AG04450 (cell line): ENCODE measurements at regions of chr18 and their contacts with region 1.

Region 1: DNA sequence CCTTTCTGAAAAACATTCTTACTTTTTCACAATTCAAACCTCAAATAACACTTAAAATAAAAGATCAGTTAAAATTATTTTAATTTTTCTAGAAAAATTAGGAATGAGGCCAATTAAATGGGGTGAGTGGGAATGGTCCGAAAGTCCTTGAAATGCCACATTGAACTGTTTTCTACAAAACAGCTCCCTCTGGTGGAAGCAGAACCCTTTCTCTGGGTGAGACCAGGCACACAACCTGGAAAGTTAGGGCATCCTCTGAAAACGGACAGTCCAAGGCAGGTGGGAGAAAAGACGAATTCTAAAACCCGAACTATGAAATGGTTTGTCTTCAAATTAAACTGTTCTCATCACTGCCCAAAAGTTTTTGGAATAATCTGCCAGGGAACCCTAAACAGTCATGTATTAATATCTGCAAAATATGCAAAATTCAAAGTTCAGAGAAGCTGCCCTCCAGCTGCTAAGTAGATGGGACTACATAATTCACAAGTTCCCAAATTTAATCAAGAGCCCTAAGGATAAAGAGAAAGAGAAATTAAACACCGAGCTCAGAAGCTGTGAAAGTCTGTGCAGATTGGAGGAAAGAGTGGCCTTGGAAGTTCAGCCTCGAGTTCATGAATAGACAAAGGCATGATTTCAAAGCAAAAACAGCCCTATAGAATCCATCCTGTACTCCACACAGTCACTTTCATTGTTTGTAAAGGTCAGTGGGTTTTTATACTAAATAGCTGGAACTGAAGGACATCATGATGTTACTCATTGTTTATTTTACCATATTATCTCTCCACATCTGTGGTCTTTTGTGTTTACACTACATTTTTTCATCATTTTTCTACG is 108.3 kb downstream of the PIEZO2 start:
- DNase-seq: peak; percentile 30
- H3K4me3 ChIP-seq: no peak overlapping the region
- H3K27ac ChIP-seq: no peak overlapping the region
- H3K27me3 ChIP-seq: peaks cover 2% of the 10 kb centered on the region
- CTCF ChIP-seq: peak; percentile 83

Region 2: GRCh38 chr18:10776493-10776892 is 264.5 kb before region 1 on chr18:
- CTCF ChIA-PET with region 1: no interaction called
- POLR2A ChIA-PET with region 1: no interaction called
- DNase-seq: no peak
- H3K4me3 ChIP-seq: no peak overlapping the region
- H3K27ac ChIP-seq: no peak overlapping the region
- H3K27me3 ChIP-seq: no peaks in the 10 kb centered on the region
- CTCF ChIP-seq: no peak

Region 3: GRCh38 chr18:10851824-10852319 is 189.2 kb before region 1 on chr18:
- CTCF ChIA-PET with region 1: interaction called, 188 read pairs
- POLR2A ChIA-PET with region 1: no interaction called
- DNase-seq: peak; percentile 33
- H3K4me3 ChIP-seq: no peak overlapping the region
- H3K27ac ChIP-seq: no peak overlapping the region
- H3K27me3 ChIP-seq: peaks cover 24% of the 10 kb centered on the region
- CTCF ChIP-seq: peak; percentile 82

Region 4: DNA sequence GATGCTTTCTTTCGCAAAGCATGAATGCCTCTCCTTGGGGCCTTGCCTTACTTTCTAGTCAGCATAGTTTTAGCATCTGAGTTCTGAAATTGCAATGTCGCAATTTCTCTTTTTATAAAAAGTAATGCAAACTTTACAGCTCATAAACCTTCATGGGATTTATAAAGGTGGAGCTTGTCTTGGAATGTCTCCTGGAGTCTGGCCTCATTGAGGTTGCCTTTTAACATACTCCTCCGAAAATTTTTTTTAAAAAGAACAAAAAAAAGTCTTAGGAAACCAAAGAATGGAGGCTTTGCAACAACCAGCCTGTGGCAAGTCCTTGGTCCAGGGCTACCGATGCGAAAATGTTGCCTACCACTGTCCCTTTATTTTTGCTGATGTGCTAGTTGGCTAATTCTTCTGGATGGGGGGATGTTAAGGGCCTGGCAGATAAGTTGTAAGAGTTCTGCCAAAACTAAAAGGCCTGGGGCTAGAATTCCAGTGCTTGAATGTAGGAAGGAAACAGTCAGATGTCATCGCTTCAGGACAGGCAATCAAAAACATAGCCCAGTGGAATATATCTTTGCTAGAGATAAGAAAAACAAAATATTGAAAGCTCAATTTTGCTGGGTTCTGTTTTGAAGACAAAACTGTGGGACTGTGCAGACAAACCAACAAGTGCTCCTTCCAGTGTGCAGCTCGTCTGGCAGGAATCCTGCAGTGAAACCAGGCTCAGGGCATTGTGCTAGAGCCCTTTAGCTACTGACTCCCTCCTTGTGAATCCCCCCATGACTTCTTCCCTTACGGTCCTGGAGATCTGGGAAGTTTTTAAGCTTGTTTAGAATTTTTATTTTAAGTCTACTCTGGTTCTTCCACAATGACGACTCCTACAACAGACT is 104.6 kb before region 1 on chr18:
- CTCF ChIA-PET with region 1: interaction called, 11 read pairs
- POLR2A ChIA-PET with region 1: no interaction called
- DNase-seq: no peak
- H3K4me3 ChIP-seq: no peak overlapping the region
- H3K27ac ChIP-seq: peak overlapping the region; percentile 49
- H3K27me3 ChIP-seq: no peaks in the 10 kb centered on the region
- CTCF ChIP-seq: no peak

Region 5: GRCh38 chr18:11027862-11028261 is 13.2 kb before region 1 on chr18:
- CTCF ChIA-PET with region 1: interaction called, 14 read pairs
- POLR2A ChIA-PET with region 1: no interaction called
- DNase-seq: no peak
- H3K4me3 ChIP-seq: no peak overlapping the region
- H3K27ac ChIP-seq: no peak overlapping the region
- H3K27me3 ChIP-seq: peaks cover 11% of the 10 kb centered on the region
- CTCF ChIP-seq: no peak

Region 6: DNA sequence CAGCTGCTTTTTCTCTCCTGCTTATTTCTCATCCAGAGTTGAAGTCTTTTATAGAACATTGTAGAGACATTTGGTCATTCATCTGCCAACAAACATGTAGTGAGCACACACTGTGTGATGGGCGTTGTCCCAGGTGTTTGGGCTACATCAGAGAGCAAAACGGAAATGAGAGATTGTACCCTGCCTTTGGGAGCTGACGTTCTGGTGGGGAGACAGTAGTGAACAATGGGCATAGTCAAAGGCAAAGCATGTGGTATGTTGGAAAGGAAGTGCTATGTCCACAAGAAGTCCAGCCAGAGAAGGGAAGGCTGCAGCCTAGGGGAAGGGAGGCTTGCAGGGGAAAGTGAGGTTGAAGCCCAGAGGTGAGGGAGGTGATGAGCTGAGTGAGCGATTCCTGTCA is 30.3 kb after region 1 on chr18:
- CTCF ChIA-PET with region 1: interaction called, 12 read pairs
- POLR2A ChIA-PET with region 1: no interaction called
- DNase-seq: no peak
- H3K4me3 ChIP-seq: no peak overlapping the region
- H3K27ac ChIP-seq: no peak overlapping the region
- H3K27me3 ChIP-seq: peaks cover 2% of the 10 kb centered on the region
- CTCF ChIP-seq: no peak

Region 7: DNA sequence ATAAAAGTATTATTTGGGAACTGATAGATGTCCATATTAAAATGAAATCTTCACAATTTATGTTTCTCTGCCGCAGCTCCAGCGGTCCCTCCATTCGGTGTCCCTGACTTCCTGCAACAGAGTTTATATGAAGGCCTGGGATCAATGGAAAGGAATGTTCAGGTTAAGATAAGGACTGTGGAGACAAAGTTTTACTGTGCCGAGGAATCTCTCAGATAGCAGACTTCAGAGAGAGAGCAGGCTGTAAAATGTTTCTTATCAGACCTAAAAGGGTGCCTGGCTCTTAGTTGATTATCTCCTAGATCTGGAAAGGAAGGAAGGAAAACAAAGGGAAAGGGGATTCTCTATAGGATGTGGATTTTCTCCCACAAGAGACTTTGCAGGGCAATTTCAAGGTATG is 302.1 kb after region 1 on chr18:
- CTCF ChIA-PET with region 1: no interaction called
- POLR2A ChIA-PET with region 1: no interaction called
- DNase-seq: no peak
- H3K4me3 ChIP-seq: no peak overlapping the region
- H3K27ac ChIP-seq: no peak overlapping the region
- H3K27me3 ChIP-seq: no peaks in the 10 kb centered on the region
- CTCF ChIP-seq: no peak

Region 8: DNA sequence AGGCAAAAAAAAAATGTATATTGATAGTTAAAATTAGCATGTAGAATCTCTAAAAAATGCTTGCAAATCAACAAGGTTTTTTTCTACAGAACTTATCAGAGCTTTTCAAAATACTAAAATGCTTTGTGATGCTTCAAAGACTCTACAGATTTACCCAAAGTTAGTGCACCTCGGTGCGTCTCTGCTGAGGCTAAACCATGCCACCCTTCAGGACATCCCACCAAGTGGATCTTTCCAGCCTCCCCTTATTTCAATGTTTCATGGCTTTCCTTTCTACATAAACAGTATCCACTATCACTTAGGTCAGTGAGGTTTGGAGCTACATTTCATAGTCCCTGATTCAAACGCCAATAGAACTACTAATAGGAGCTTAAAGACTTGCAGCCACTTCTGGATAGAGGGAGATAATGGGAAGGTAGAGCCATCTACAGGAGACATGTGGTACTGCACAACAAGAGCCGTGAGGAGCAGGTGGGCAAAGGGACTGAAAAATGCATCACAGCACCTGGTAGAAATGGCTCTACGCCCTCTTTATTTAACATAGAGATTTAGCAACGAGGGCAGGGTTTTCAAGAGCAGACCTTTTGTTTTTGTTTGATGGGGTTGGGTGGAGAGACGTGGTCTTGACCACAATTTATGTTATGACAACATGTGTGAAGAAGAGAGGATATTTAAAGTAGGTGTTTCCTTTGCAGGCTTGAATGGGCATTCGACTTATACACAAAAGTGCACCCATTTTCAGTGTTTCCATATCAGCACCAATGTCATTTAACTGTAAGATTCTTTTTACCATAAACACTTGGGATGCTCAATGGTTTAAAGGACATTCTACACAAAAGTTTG is 512.3 kb after region 1 on chr18:
- CTCF ChIA-PET with region 1: interaction called, 24 read pairs
- POLR2A ChIA-PET with region 1: no interaction called
- DNase-seq: peak; percentile 23
- H3K4me3 ChIP-seq: no peak overlapping the region
- H3K27ac ChIP-seq: no peak overlapping the region
- H3K27me3 ChIP-seq: peaks cover 8% of the 10 kb centered on the region
- CTCF ChIP-seq: peak; percentile 97